Transverse colon (tissue), 4 donors: ENCODE measurements at regions of chr10 and their contacts with region 1.

Region 1: DNA sequence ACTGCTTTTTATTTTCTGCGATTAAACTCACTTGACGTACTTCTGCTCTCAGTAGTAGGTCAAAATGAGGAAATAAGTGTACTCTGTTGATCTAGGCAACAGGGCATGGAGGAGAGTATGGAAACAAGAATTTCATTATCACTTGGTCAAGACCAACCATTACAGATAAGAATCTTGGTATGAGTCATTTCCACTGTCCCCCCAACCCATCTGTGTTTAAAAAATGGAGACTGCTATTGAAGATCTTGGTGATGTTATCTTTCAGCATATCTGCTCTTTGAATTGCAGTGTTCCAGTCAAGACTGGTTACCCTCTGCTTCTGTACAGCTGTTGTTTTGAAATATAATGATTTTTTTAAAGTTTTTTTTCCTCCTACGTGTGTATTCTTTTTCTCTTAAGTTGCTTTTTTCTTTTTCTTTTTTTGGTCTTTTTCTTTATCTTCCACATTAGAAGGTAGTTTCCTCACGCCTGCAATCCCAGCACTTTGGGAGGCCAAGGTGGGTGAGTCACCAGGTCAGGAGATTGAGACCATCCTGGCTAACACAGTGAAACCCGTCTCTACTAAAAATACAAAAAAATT is 11.7 kb downstream of the STAM start:
- DNase-seq: no peak
- H3K4me3 ChIP-seq: no peak overlapping the region
- H3K27ac ChIP-seq: no peak overlapping the region
- H3K4me1 ChIP-seq: peaks cover 0 to 16% (median 7%) of the 10 kb centered on the region in 4 donors
- H3K27me3 ChIP-seq: no peaks in the 10 kb centered on the region
- CTCF ChIP-seq: no peak
- EP300 ChIP-seq: no peak
- POLR2A ChIP-seq: no peak

Region 2: DNA sequence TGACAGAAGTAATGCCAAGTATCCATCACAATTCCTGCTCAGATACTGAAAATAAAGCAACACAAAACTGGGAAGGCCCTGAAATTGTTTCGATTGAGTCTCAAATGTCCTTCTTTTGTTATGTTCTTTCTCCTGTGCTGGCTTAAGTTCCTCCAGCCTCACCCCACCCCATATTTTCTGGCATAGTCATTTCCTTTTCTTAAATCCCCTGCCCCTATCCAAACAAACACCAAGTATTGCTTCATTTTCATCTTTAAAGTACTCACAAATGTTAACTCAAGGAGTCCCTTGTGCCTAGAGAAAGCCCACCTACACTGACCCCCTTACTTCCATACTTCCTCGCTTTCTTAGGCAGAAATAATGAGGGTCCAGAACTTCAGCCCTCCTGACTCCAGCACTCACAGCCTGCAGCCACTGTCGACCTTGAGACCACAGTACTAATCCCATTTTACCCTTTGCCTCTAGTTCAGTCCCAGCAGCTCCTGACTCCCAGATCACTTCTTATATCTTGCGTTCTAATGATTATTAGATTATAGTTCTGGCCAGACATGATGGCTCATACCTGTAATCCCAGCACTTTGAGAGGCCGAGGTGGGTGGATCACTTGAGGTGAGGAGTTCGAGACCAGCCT is 128.0 kb before region 1 on chr10:
- in situ Hi-C with region 1: loop called in 1 of 4 experiments (anchors 25 kb)
- intact Hi-C with region 1: no loop called
- DNase-seq: no peak
- H3K4me3 ChIP-seq: no peak overlapping the region
- H3K27ac ChIP-seq: no peak overlapping the region
- H3K4me1 ChIP-seq: peaks cover 0 to 7% (median 0%) of the 10 kb centered on the region in 4 donors
- H3K27me3 ChIP-seq: no peaks in the 10 kb centered on the region
- CTCF ChIP-seq: no peak
- EP300 ChIP-seq: no peak
- POLR2A ChIP-seq: no peak